Heart right ventricle (tissue), 16 donors: ENCODE measurements at regions of chrX and their contacts with region 1.

Region 1: DNA sequence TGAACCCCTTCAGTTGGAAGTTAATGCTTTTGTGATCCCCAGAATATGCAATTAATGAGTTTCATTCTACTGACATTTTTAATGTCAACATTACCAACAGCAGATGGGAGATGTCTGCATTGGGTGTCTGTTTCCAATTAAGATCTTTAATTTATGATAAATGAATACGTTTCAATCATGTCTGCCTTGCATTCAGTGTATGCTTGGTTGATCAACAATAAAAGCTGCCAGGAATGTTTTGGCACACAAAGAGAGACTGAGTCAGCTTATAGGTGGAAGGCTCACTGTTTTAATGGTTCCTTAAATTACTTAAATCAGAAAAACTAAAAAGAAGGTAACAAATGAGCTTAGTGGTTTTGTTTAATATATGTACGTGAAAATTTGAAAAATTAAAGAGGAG is 359.9 kb upstream of the CNKSR2 start:
- DNase-seq: no peak
- ATAC-seq: no peak
- H3K4me3 ChIP-seq: no peak overlapping the region
- H3K27ac ChIP-seq: no peak overlapping the region
- H3K4me1 ChIP-seq: no peaks in the 10 kb centered on the region
- H3K27me3 ChIP-seq: no peaks in the 10 kb centered on the region
- CTCF ChIP-seq: no peak

Region 2: GRCh38 chrX:21153503-21153902 is 139.2 kb after region 1 on chrX:
- intact Hi-C with region 1: no loop called
- DNase-seq: peak in 1 of 2 donors; percentile 65
- ATAC-seq: peak; percentile 87 to 99 (median 97)
- H3K4me3 ChIP-seq: no peak overlapping the region
- H3K27ac ChIP-seq: peak overlapping the region in 7 of 10 donors; percentile 34 to 84 (median 78)
- H3K4me1 ChIP-seq: peaks cover 0 to 24% (median 3%) of the 10 kb centered on the region in 9 donors
- H3K27me3 ChIP-seq: no peaks in the 10 kb centered on the region
- CTCF ChIP-seq: no peak

Region 3: DNA sequence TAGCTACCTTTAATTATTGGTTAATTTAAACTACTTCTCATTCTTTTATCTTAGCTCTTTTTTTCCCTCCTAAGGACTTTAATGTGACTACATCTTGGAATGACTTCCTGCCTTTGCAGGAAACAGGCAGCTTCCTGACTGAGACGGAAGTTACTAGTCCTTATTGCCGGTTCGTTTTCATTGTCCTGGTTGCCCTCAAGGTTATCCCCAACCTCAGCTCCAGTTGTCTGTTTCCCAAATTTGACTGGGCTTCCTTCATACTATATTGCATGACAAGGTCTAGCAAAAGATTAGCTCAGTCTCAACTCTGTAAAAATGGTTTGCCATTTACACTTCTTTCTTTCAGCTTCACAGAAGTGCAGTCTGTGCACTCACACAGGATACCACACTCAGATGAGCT is 1875.5 kb after region 1 on chrX:
- intact Hi-C with region 1: loop called in 1 of 10 experiments (anchors 10 kb)
- DNase-seq: peak in 1 of 2 donors; percentile 3
- ATAC-seq: no peak
- H3K4me3 ChIP-seq: no peak overlapping the region
- H3K27ac ChIP-seq: no peak overlapping the region
- H3K4me1 ChIP-seq: no peaks in the 10 kb centered on the region
- H3K27me3 ChIP-seq: peaks cover 0 to 8% (median 0%) of the 10 kb centered on the region in 7 donors
- CTCF ChIP-seq: no peak